Astrocyte of the cerebellum (primary cell): ENCODE measurements at regions of chr2 and their contacts with region 1.

Region 1: DNA sequence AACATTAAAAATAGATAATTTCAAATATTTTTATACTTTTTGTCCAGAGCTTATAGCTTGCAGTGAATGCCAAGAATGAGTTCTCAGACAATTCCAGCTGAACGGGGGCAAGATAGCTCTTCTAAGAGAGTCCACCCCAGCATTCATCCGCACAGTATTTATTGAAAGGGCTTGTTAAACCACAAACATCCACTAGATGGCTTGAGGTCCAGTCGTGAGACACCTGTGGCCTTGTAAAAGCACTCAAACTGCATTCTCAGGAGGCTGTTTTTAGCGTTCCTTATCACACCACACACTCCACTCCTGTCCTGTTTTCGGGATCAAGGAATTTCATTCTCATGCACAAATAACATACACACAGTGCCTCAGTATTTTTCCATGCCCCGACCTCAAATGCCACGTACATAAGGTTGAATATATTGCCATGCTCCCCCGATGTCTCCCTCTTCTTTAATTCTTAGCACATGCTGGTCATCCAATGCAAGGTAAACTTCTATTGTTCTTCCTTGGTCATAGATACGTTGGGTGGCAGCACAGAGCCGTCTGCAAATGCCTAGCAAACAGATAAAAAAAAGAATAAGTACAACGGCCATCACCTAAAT is 47.4 kb downstream of the DNAJC10 start:
- DNase-seq: peak; percentile 31
- H3K4me3 ChIP-seq: no peak overlapping the region
- CTCF ChIP-seq: peak; percentile 71

Region 2: DNA sequence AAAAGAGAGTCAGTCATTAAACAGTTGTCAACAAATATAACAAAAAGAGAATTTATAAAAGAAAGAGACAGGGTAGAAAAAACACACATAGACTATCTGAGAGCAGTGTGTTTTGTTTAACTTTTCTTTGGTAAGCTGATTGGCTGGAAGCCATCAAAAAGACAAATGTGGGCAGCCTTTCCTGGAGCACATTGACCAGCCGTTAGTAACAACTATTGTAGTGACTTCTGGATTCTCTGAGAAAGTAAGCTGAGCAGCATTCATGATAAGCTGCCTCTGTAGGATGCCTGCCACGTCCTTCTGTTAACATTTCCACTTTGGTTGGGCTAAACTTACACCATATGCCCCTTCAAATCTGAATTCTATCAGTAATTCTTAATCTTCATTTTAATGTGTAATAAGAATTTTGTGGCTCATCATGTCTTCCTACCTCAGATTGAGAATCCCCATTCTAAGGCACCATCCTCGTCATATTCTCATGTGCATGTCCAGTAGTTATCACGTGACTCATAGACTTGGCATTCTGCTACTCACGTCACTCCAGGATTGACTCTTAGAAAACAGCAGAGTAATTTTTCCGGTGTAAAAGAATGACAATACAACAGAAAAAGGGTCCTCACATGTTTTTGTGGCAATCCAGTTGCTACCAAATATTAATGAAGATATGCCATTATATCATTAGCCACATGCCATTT is 90.8 kb before region 1 on chr2:
- in situ Hi-C with region 1: no loop called
- DNase-seq: peak; percentile 50
- H3K4me3 ChIP-seq: no peak overlapping the region
- CTCF ChIP-seq: no peak

Region 3: DNA sequence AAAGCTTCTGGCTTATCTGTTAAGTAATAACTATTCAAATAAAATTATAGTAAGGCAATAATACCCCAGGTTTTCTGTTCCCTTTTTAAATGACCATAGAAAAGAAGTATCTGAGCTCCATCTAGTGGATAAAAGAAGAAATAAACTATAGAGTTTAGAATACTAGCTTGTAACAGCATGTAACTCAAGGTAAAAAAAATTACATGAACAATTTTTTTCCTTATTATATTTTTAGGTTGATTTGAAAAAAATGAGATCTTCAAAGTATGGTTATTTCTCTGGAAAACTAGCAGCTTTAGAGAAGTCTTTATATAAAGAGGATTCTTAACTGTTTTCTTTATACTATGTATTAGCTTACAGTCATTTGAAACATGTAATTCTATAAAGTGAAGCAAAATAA is 216.7 kb after region 1 on chr2:
- in situ Hi-C with region 1: loop called (anchors 25 kb)
- DNase-seq: peak; percentile 29
- H3K4me3 ChIP-seq: no peak overlapping the region
- CTCF ChIP-seq: no peak

Region 4: DNA sequence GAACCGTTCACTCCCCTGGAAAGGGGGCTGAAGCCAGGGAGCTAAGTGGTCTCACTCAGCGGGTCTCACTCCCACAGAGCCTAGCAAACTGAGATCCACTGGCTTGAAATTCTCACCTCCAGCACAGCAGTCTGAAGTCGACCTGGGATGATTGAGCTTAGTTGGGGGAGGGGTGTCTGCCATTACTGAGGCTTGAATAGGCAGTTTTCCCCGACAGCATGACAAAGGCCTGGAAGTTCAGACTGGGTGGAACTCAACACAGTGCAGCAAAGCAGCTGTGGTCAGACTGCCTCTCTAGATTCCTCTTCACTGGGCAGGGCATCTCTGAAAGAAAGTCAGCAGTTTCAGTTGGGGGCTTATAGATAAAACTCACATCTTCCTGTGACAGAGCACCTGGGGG is 653.3 kb after region 1 on chr2:
- in situ Hi-C with region 1: no loop called
- DNase-seq: no peak
- H3K4me3 ChIP-seq: no peak overlapping the region
- CTCF ChIP-seq: no peak